ENCODE measurements at regions of chr18 and their contacts with region 1.

Region 1: GRCh38 chr18:35756506-35757117 is 175.1 kb downstream of the GALNT1 start:
- DNase-seq: peak in 1 of 2 donors; percentile 71
- ATAC-seq: peak; percentile 73 to 88 (median 79)
- H3K4me3 ChIP-seq: no peak overlapping the region
- H3K27ac ChIP-seq: no peak overlapping the region
- H3K4me1 ChIP-seq: no peaks in the 10 kb centered on the region
- H3K27me3 ChIP-seq: no peaks in the 10 kb centered on the region
- CTCF ChIP-seq: peak; percentile 74 to 86 (median 81)

Region 2: GRCh38 chr18:35415511-35416073 is 341.0 kb before region 1 on chr18:
- intact Hi-C with region 1: loop called in 1 of 10 experiments (anchors 10 kb)
- DNase-seq: no peak
- ATAC-seq: peak in 1 of 8 donors; percentile 48
- H3K4me3 ChIP-seq: peak overlapping the region in 1 of 10 donors; percentile 10
- H3K27ac ChIP-seq: peak overlapping the region in 1 of 10 donors; percentile 7
- H3K4me1 ChIP-seq: peaks cover 0 to 28% (median 4%) of the 10 kb centered on the region in 9 donors
- H3K27me3 ChIP-seq: no peaks in the 10 kb centered on the region
- CTCF ChIP-seq: no peak

Region 3: DNA sequence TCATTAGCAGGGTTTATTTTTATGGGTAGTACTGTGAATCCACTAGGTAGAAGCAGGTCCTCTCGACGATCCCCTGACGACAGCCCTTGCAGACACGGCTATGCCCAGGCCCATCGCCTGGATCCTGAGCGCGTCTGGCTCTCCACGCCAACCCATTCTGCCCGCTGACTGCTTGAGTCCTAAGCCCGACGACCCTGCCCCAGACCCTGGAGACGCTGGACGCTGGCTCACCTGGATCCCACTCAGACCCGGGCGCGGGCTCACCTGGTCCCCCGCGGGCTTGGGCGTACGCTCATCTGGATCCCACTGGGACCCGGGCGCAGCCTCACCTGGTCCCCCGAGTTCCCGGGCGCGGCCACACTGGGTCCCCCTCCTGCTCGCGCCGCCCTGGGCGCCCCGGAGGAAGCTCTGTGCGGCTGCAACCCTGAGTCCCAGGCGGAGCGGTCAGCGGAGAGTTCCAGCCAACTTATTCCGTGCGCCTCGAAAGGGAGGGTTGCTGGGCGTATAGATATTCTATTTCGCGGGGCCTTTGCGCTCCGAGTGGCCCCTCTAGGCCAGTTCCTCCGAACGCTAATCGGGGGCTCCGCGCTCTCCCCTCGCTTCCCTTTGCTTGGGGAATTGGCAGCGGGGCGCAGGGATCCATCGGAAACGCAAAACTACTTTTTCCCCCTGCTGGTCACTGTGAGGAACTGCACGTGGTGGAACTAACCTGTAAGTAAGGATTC is 193.5 kb after region 1 on chr18:
- intact Hi-C with region 1: loop called (anchors 1 to 5 kb)
- DNase-seq: peak; percentile 45 to 60
- ATAC-seq: peak; percentile 74 to 92 (median 84)
- H3K4me3 ChIP-seq: peak overlapping the region; percentile 26 to 68 (median 62)
- H3K27ac ChIP-seq: no peak overlapping the region
- H3K4me1 ChIP-seq: peaks cover 0 to 9% (median 3%) of the 10 kb centered on the region in 9 donors
- H3K27me3 ChIP-seq: peaks cover 0 to 19% (median 0%) of the 10 kb centered on the region in 7 donors
- CTCF ChIP-seq: peak; percentile 88 to 96 (median 93)

Measured in heart right ventricle (tissue), 16 donors.